ENCODE measurements at regions of chr2 and their contacts with region 1.

Region 1: DNA sequence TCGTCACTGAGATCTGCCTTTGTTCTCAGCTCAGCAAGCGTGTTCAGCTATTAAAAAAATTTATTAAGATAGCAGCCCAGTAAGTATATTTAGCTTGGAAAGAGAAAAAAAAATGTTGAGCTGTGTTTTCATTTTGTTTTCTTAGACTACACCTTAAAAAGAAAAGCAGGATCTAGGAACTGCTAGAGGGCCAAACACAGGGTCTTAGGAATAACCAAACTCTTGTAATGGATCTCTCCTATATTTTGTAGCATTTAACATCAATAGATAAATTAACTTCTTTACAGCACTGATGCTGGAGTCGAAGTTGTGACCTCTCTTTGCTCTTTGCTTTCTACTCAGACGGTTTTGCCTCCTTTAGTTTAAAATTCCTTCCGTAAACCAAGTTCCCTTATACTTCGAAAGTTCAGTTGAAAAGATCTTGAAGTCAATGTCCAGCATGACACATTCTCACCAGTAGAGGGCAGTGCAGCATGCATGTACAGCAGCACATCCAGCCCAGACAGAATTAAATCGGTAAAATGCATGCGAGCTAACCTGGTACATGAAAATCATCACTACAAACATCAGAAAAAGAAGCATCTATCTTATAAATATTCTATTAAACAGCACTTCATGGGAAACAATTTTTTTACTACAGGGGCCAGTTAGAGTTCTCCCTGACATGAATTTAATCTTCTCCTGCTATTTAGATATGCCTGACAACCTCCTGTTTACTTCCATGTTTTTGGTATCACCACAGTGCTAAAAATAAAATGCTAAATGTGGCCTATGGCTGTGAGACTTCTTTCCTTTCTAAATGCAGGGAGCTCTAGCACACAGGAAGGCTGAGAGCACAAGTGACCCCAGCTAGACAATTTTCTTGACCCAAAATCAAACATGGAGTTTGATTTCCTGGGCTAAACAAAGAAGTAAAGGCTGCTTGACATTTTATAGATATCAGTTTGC is 48.2 kb upstream of the MAP3K20 start:
- H3K4me3 ChIP-seq: no peak overlapping the region
- H3K27ac ChIP-seq: no peak overlapping the region
- H3K4me1 ChIP-seq: 0 out of 2 replicates have a peak, but pooled peaks cover 3% of the 10 kb centered on the region
- CTCF ChIP-seq: peak; percentile 78; the same call in 1 of the 2 replicates

Region 2: DNA sequence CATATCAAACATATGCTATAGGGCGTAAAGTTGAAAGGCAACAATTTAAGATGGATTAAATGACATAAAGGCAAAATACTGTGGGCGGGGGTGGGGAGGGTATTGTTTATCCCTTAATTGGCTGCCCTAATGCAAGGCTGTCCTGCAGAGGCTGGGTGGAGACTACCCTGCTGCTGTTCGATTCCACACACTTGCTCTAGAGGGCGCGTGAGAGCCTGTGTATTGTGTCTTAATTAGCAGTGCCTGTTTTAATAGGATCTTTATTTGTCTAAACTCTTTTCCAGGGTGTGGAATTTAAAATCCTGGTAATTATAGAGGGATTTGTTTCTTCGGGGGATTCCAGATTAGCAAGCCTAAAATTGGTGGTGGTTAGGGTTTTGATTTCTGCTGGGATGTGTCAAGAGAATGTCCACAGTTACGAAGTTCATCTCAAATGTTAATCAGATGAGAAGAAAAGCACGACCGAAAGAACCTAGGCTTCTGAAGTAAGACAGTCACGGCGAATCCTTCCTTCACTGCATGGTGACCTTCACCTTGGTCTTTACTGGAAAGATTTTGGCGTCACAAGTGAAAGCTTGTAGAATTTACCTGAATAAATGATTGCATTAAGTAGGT is 55.3 kb before region 1 on chr2:
- CTCF ChIA-PET with region 1: interaction called, 27 read pairs
- POLR2A ChIA-PET with region 1: no interaction called
- H3K4me3 ChIP-seq: no peak overlapping the region
- H3K27ac ChIP-seq: no peak overlapping the region
- H3K4me1 ChIP-seq: no peaks in the 10 kb centered on the region
- CTCF ChIP-seq: 0 out of 2 replicates have a peak, but pooled peaks have one; percentile 33

Region 3: DNA sequence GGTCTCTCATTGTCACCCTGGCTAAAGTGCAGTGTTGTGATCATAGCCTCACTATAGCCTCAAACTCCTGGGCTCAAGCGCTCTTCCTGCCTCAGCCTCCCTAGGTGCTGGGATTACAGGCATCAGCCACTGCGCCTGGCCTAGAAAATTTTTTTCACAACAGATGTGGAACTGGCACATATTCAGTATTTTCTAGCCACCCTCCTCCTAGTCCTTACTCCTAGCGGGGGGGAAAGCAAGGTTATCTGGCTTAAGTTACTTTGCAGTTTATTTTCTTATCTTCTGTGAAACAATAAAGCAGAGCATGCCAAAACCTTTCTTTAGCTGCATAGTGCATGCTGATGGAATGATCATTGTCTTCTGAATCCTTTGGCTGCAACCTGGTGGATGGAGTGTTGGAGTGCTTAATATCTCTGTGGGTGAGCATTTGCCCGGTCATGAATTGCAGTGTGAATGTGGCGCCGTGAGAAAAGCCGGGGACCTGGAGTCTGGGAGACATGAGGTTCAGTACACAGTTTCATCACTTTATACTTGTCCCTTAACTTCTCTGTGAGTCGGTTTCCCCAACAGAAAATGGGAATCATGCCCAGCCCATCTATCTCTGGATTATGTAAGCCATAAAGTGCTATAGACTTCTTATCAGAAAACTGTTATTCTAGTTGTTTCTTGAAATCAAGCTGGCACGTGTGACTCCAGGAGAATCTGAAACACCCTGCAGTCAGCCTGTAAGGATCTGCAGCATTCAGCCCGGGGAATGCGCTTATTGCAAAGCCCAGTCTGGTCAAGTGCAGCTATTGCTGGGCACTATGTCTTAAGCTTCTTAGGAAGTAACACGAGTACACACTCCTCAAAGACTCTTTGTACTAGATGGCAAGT is 10.0 kb after region 1 on chr2:
- CTCF ChIA-PET with region 1: interaction called, 22 read pairs
- POLR2A ChIA-PET with region 1: no interaction called
- H3K4me3 ChIP-seq: no peak overlapping the region
- H3K27ac ChIP-seq: no peak overlapping the region
- H3K4me1 ChIP-seq: peaks cover 3% of the 10 kb centered on the region; the same call in 1 of the 2 replicates
- CTCF ChIP-seq: no peak

Region 4: DNA sequence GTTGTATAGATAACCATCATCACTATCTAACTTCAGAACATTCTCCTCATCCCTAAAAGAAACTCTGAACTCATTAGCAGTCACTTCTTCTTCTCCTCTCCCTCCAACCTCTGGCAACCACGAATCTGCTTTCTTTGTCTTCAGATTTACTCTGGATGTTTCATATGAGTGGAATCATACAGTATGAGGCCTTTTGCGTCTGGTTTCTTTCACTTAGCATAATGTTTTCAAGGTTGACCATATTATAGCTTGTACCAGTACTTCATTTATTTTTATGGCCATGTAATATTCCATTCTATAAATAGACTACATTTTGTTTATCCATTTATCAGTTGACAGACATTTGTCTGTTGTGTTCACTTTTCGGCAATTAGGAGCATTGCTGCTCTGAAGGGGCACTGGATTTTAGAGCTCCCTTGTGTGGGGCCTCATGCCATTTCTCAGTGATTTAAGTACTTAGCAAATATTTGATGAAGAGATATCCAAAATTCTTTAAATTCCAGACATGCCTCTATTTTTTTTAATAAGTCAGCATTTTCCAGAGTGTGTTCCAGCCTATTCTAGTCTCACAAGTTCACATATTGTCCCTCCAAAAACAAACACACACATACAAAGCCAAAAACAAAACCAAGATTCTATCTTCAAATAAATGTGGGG is 25.7 kb after region 1 on chr2:
- CTCF ChIA-PET with region 1: interaction called, 32 read pairs
- POLR2A ChIA-PET with region 1: no interaction called
- H3K4me3 ChIP-seq: no peak overlapping the region
- H3K27ac ChIP-seq: no peak overlapping the region
- H3K4me1 ChIP-seq: 0 out of 2 replicates have a peak, but pooled peaks cover 5% of the 10 kb centered on the region
- CTCF ChIP-seq: no peak

Region 5: DNA sequence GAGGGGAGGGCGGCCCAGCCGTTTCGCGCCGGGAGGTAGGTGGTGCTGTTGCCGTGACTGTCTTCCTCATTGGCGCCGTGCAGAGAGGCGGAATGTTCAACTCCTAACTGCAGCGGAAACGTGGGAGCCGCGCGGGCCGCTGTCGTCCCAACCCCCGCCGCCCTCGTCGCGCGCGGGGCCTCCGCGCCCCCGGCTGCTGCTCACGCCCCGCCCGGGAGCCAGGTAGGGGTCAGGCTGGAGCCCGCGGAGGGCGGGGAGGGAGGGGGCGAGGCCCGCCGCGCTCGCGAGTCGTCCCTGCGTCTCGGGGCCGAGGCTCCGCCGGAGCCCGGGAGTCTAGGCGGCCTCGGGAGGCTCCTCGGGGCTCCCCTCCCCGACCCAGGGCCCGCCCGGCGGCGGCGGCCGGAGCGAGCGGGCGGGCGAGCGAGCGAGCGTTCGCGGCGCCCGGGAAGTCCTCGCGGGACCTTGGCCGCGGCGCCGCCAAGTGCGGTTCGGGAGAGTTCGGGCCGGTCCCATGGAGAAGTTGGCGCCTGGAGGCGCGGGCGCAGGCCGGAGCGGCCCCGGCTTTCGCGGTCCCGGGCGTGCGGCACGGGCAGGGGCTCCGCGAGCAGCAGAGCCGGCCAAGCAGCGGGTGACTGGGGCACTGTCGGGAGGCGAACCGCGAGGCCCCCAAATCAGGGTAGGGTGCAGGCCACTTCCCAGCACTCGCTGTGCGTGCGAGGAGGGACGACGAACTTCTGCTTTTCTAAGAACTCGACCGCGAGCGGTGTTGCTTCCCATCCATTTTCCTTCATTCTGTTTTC is 48.5 kb after region 1 on chr2 and contains the start of gene MAP3K20:
- CTCF ChIA-PET with region 1: interaction called, 17 read pairs
- POLR2A ChIA-PET with region 1: interaction called, 3 read pairs
- H3K4me3 ChIP-seq: peak within 1 kb of the TSS; percentile 88
- H3K27ac ChIP-seq: peak within 1 kb of the TSS; percentile 91
- H3K4me1 ChIP-seq: no peaks in the 10 kb centered on the region
- CTCF ChIP-seq: peak; percentile 80

Region 6: DNA sequence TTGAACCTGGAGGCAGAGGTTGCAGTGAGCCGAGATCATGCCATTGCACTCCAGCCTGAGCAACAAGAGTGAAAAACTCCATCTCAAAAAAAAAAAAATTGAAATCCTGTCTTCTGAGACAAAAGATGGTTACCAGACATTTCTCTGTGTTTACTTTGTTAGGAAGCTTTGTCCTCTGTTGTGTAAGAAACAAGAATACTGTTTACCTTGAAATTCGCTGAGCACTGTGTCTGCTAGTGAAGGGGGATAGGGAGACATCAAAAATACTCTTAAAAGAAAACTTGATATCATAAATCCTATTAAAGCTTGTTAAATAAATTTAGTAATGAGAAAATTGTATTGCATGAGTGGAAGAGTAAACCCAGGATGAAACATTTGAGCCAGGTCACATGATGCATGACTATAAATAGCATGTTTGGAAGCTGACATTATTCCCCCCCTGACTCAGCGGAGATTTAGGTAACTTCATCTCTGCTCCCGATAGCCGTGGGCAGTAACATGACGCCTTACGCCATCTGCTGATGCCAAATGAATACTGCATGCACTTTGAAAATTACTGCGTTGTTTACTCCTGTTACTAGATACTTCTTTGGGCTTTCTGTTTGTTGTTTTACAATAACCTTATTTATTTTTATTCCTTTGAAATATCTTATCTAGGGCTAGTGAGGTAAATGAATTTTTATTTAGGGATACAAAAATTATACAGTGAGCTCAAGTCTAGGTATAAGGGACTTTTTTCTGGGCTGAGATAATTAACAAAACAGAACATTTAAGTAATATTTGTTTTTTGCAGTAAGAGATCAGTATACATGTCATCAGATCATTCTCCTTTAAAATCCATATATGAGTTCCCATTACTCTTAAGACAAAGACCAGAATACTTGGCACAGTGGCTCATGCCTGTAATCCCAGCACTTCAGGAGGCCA is 183.1 kb after region 1 on chr2:
- CTCF ChIA-PET with region 1: interaction called, 255 read pairs
- POLR2A ChIA-PET with region 1: no interaction called
- H3K4me3 ChIP-seq: no peak overlapping the region
- H3K27ac ChIP-seq: no peak overlapping the region
- H3K4me1 ChIP-seq: no peaks in the 10 kb centered on the region
- CTCF ChIP-seq: peak; percentile 68